Pancreas (tissue), 10 donors: ENCODE measurements at regions of chr12 and their contacts with region 1.

Region 1: DNA sequence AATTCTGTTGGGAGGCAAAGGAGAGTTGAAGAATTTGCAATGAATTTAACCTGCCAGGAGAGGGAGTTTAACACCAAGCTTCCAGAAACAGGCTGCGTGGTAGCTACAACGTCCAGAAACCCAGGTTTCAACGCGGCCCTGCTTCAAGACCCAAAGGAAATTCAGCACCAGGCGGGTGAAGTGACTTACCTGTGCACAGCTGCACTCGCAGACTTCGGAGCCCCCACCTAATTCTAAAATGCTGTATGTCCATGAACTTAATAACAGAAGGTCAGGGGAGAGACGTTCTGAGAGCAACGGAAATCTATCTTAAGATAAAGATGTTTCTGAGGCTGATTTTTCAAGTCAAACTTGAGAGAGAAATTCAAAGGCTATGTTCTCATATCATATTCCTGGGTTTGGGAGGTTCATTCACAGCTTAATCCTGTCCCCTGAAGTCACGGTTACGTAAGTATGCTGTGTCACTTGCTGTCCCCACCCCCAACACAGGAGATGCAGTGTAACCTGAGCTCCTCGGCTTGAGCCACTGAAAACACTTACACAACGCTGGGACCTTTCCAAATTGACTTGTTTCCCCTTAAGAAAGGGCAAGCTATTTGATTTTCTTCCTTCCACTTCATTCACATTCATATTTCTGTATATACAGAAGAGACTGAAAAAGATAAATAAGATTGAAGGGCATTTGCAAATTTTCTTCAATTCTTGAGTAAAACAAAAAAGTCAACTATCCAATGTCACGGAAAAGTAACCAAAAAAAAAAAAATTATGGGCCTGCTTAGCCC is 22.7 kb downstream of the CLIP1 start:
- DNase-seq: peak in 4 of 6 donors; percentile 68 to 85 (median 80)
- ATAC-seq: peak; percentile 92 to 94 (median 93)
- H3K4me3 ChIP-seq: peak overlapping the region in 2 of 4 donors; percentile 15 to 21
- H3K27ac ChIP-seq: peak overlapping the region; percentile 67 to 93 (median 84)
- H3K4me1 ChIP-seq: peaks cover 5 to 23% (median 20%) of the 10 kb centered on the region in 3 donors
- H3K27me3 ChIP-seq: no peaks in the 10 kb centered on the region
- CTCF ChIP-seq: peak in 3 of 4 donors; percentile 42 to 49 (median 48)

Region 2: GRCh38 chr12:122463806-122464205 is 64.0 kb after region 1 on chr12:
- intact Hi-C with region 1: loop called in 1 of 3 experiments (anchors 5 kb)
- DNase-seq: peak in 1 of 6 donors; percentile 12
- ATAC-seq: no peak
- H3K4me3 ChIP-seq: no peak overlapping the region
- H3K27ac ChIP-seq: peak overlapping the region; percentile 17 to 70 (median 29)
- H3K4me1 ChIP-seq: no peaks in the 10 kb centered on the region
- H3K27me3 ChIP-seq: no peaks in the 10 kb centered on the region
- CTCF ChIP-seq: no peak

Region 3: DNA sequence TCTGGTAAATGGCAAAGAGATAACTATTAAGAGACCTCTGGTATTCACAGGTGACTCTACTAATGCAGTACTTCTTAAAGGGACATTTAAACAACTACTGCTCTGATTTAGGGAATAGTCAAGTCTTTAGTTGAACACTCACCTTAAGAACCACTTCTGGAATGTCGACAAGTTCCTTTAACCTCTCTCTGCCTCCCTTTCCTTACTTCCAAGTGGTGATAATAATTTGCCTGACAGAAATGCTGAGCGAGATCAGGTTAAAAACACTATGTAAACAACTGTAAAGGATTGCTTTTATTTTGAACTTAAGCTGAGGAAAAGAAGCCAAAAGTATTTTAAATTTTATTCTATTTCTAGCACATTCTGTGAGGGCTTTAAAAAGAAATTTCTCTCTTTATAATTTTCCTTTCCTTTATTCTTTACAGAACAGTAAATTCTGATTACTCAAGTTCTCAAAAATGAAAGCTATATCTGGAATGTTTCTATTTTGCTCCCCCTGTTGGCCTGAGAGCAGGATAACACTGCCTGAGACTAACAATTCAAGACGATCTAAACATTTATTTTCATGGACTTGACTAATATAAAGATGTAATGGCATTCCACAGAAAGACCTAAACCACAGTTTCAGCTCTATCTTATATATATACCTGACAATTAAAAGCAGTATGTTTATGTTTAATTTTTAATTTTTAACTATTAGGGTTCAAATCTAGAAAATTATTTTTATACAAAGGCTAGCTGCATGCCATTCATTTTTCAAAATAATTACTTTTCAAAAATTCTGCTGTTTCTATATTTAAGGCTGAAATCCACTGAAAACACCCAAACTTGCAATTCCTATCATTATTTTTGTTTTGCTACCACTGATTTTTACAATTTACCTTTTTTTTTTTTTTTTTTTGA is 71.8 kb after region 1 on chr12:
- intact Hi-C with region 1: loop called in 2 of 3 experiments (anchors 5 kb)
- DNase-seq: no peak
- ATAC-seq: peak; percentile 55 to 93 (median 86)
- H3K4me3 ChIP-seq: no peak overlapping the region
- H3K27ac ChIP-seq: peak overlapping the region in 3 of 4 donors; percentile 6 to 32 (median 20)
- H3K4me1 ChIP-seq: peaks cover 4 to 8% (median 6%) of the 10 kb centered on the region in 3 donors
- H3K27me3 ChIP-seq: no peaks in the 10 kb centered on the region
- CTCF ChIP-seq: peak; percentile 22 to 70 (median 60)

Region 4: DNA sequence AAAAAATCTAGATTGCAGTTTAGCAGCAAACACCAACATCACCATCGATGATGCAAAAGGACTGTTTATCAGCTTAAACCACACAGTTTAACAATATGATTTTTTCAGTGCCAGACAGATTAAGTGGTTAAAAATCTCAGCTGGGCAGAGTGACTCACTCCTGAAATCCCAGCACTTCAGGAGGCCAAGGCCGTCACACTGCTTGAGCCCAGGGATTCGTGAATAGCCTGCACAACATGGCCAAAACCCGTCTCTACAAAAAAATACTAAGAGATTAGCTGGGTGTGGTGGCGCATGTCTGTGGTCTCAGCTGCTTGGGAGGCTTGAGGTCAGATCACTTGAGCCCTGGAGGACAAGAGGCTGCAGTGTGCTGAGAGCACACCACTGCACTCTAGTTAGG is 118.1 kb after region 1 on chr12:
- intact Hi-C with region 1: no loop called
- DNase-seq: no peak
- ATAC-seq: peak in 3 of 4 donors; percentile 40 to 51 (median 44)
- H3K4me3 ChIP-seq: no peak overlapping the region
- H3K27ac ChIP-seq: no peak overlapping the region
- H3K4me1 ChIP-seq: peaks cover 6 to 12% (median 8%) of the 10 kb centered on the region in 3 donors
- H3K27me3 ChIP-seq: no peaks in the 10 kb centered on the region
- CTCF ChIP-seq: no peak